MCF 10A (cell line): ENCODE measurements at regions of chr7 and their contacts with region 1.

Region 1: DNA sequence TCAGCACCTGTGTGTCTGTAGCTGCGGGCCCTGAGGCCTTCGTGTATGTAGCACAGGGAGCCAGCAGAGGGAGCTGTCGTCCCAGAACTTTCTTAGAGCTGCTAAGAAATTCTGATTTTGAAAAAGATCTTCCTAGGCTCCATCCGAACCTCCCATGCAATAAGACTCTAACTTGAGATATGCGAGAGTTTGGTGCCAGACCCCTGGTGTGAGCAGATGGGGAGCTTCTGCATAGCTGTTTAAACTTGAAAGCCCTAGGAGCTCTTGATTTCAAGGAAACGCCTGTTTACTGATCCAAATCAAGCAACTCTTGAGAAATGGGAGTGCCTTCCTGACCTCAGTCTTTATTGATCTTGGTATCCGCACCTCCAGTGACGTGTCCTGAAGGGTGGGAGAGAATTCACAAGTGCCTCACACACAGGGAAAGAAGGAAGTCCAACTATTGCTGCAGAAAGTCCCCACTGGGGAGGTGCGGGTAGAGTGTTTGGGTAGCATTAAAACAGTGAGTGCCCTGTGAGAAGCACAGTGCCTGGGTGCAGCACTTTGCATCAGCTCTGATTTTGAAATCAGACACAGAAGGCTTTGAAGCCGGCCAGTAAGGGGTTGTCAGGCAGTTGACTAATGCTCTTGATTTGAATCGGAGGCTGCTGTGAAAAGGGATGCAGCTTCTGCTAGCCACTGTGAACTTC is 66.4 kb upstream of the STRIP2 start:
- DNase-seq: peak; percentile 73
- H3K4me3 Mint-ChIP-seq: no peak overlapping the region
- H3K27ac Mint-ChIP-seq: no peak overlapping the region
- H3K4me1 Mint-ChIP-seq: no peaks in the 10 kb centered on the region
- H3K27me3 Mint-ChIP-seq: no peaks in the 10 kb centered on the region
- CTCF ChIP-seq: peak; percentile 86

Region 2: GRCh38 chr7:129169686-129170440 is 198.0 kb before region 1 on chr7:
- CTCF ChIA-PET with region 1: no interaction called
- POLR2A ChIA-PET with region 1: no interaction called
- intact Hi-C with region 1: no loop called
- DNase-seq: no peak
- H3K4me3 Mint-ChIP-seq: no peak overlapping the region
- H3K27ac Mint-ChIP-seq: no peak overlapping the region
- H3K4me1 Mint-ChIP-seq: no peaks in the 10 kb centered on the region
- H3K27me3 Mint-ChIP-seq: no peaks in the 10 kb centered on the region
- CTCF ChIP-seq: no peak

Region 3: DNA sequence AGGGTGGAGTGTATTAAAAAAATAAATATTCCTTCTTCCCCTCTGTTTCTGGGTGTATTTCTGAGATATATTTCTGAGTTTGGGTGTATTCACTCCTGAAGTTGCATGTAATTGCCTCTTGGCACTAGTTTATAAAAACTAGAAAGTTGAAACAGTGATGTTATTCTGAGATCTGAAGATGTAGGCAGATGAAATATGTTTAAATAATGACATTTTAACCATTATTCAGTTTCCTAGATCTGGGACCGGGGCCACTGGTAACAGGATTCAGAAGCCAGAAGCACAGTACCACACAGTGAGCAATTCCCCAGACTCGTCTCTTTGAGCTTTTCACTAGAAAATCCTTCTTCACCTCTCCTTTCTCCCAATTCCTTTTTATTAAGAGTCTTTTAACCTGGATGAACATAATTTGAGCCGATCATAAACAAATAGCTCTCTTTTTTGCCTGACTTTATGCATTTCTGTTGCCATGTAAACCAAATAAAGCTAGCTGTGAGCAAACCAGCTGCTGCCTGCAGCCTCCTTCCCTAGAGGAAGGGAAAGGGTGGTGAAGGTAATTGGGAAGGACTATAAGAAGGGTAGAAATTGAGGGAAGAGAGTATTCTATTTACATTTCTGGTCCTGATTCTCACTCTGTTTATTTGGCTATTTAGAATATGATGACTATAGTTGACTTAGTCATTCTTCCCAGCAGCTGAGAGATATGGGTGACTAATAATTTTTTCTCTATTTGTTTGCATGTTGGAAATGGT is 35.4 kb before region 1 on chr7:
- CTCF ChIA-PET with region 1: interaction called, 10 read pairs
- POLR2A ChIA-PET with region 1: no interaction called
- intact Hi-C with region 1: no loop called
- DNase-seq: peak; percentile 21
- H3K4me3 Mint-ChIP-seq: no peak overlapping the region
- H3K27ac Mint-ChIP-seq: no peak overlapping the region
- H3K4me1 Mint-ChIP-seq: peaks cover 7% of the 10 kb centered on the region
- H3K27me3 Mint-ChIP-seq: no peaks in the 10 kb centered on the region
- CTCF ChIP-seq: no peak

Region 4: GRCh38 chr7:129351320-129351719 is 16.5 kb before region 1 on chr7:
- CTCF ChIA-PET with region 1: interaction called, 32 read pairs
- POLR2A ChIA-PET with region 1: no interaction called
- intact Hi-C with region 1: no loop called
- DNase-seq: no peak
- H3K4me3 Mint-ChIP-seq: no peak overlapping the region
- H3K27ac Mint-ChIP-seq: no peak overlapping the region
- H3K4me1 Mint-ChIP-seq: no peaks in the 10 kb centered on the region
- H3K27me3 Mint-ChIP-seq: no peaks in the 10 kb centered on the region
- CTCF ChIP-seq: no peak

Region 5: GRCh38 chr7:129433847-129434674 is 66.2 kb after region 1 on chr7 and contains the start of gene STRIP2:
- CTCF ChIA-PET with region 1: interaction called, 11 read pairs
- POLR2A ChIA-PET with region 1: interaction called, 6 read pairs
- intact Hi-C with region 1: no loop called
- DNase-seq: peak; percentile 84
- H3K4me3 Mint-ChIP-seq: peak within 1 kb of the TSS; percentile 96
- H3K27ac Mint-ChIP-seq: peak within 1 kb of the TSS; percentile 29
- H3K4me1 Mint-ChIP-seq: peaks cover 20% of the 10 kb centered on the region
- H3K27me3 Mint-ChIP-seq: no peaks in the 10 kb centered on the region
- CTCF ChIP-seq: peak; percentile 8
- total RNA-seq, gene STRIP2: 6.3 and 18.3 TPM in 2 replicates

Region 6: DNA sequence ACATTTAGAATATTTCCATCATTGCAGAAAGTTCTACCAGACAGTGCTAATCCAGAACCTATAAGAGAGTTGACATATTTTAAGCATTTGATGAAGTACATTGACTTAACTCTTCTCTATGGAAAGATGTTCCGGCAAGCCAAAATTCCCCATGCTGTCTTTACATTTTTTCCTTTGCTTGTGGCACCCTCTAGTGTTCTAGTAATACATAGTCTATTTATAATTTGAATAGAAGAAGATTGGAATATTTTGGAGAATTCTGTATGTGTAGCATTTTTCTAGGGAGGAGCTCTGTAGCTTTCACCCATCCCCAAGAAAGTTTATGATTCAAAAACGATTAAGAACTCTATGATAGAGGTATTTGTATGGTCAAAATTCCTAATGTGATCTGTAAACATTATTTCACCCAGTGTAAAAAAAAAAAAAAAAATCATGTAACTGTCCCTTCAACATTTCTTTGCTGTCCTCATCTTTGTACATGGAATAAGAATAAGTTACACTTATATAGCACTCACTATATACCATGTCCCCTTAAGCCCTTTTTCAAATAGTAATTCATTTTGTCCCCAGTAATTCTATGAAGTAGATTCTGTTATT is 276.9 kb after region 1 on chr7:
- CTCF ChIA-PET with region 1: interaction called, 50 read pairs
- POLR2A ChIA-PET with region 1: no interaction called
- intact Hi-C with region 1: loop called (anchors 1 kb)
- DNase-seq: peak; percentile 62
- H3K4me3 Mint-ChIP-seq: no peak overlapping the region
- H3K27ac Mint-ChIP-seq: no peak overlapping the region
- H3K4me1 Mint-ChIP-seq: peaks cover 15% of the 10 kb centered on the region
- H3K27me3 Mint-ChIP-seq: no peaks in the 10 kb centered on the region
- CTCF ChIP-seq: peak; percentile 41